Activated CD4-positive, alpha-beta T cell treated with anti-CD3 and anti-CD28 coated beads for 36 hours (primary cell): ENCODE measurements at regions of chr12 and their contacts with region 1.

Region 1: GRCh38 chr12:50597200-50598195 is 92.7 kb downstream of the DIP2B start:
- DNase-seq: peak; percentile 78
- ATAC-seq: peak; percentile 100
- H3K4me3 Mint-ChIP-seq: peak overlapping the region; percentile 44
- H3K27ac Mint-ChIP-seq: peak overlapping the region; percentile 90
- H3K4me1 Mint-ChIP-seq: peaks cover 45% of the 10 kb centered on the region
- H3K27me3 Mint-ChIP-seq: no peaks in the 10 kb centered on the region

Region 2: GRCh38 chr12:50542448-50542847 is 55.0 kb before region 1 on chr12:
- CTCF ChIA-PET with region 1: interaction called, 3 read pairs
- POLR2A ChIA-PET with region 1: no interaction called
- intact Hi-C with region 1: loop called (anchors 1 to 2 kb)
- DNase-seq: peak; percentile 59
- ATAC-seq: peak; percentile 98
- H3K4me3 Mint-ChIP-seq: no peak overlapping the region
- H3K27ac Mint-ChIP-seq: peak overlapping the region; percentile 92
- H3K4me1 Mint-ChIP-seq: peaks cover 61% of the 10 kb centered on the region
- H3K27me3 Mint-ChIP-seq: no peaks in the 10 kb centered on the region

Region 3: DNA sequence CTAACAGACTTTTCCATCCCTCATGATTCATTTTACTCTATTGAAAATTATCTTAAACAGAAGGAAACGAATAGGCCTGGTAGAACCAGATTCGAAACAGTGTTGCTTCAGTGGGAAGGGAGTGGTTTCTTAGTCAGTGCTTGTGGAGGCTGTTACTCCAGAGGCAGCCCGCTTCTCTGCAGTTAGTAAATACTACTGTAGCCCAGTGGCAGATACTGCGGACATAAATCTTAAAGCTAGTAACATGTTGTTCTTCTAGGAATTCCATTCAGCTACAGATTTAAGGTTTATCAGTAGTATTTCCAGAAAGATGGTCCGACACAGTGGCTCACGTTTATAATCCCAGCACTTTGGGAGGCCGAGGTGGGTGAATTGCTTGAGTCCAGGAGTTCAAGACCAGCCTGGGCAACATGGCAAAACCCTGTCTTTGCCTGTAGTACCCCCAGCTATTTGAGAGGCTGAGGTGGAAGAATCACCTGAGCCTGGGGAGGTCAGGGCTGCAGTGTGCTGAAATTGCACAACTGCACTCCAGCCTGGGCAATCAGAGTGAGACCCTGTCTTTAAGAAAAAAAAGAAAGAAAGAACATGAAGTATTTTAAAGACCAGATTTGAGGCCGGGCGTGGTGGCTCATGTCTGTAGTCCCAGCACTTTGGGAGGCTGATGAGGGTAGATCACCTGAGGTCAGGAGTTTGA is 46.8 kb before region 1 on chr12:
- CTCF ChIA-PET with region 1: interaction called, 4 read pairs
- POLR2A ChIA-PET with region 1: interaction called, 3 read pairs
- intact Hi-C with region 1: loop called in 1 of 2 experiments (anchors 1 kb)
- DNase-seq: no peak
- ATAC-seq: no peak
- H3K4me3 Mint-ChIP-seq: no peak overlapping the region
- H3K27ac Mint-ChIP-seq: no peak overlapping the region
- H3K4me1 Mint-ChIP-seq: peaks cover 66% of the 10 kb centered on the region
- H3K27me3 Mint-ChIP-seq: no peaks in the 10 kb centered on the region

Region 4: GRCh38 chr12:50620109-50620977 is 22.8 kb after region 1 on chr12:
- CTCF ChIA-PET with region 1: no interaction called
- POLR2A ChIA-PET with region 1: no interaction called
- intact Hi-C with region 1: loop called in 1 of 2 experiments (anchors 1 kb)
- DNase-seq: peak; percentile 59
- ATAC-seq: peak; percentile 86
- H3K4me3 Mint-ChIP-seq: no peak overlapping the region
- H3K27ac Mint-ChIP-seq: peak overlapping the region; percentile 86
- H3K4me1 Mint-ChIP-seq: peaks cover 64% of the 10 kb centered on the region
- H3K27me3 Mint-ChIP-seq: no peaks in the 10 kb centered on the region

Region 5: GRCh38 chr12:50637870-50638481 is 40.5 kb after region 1 on chr12:
- CTCF ChIA-PET with region 1: interaction called, 5 read pairs
- POLR2A ChIA-PET with region 1: no interaction called
- intact Hi-C with region 1: loop called (anchors 1 to 5 kb)
- DNase-seq: no peak
- ATAC-seq: peak; percentile 42
- H3K4me3 Mint-ChIP-seq: no peak overlapping the region
- H3K27ac Mint-ChIP-seq: peak overlapping the region; percentile 49
- H3K4me1 Mint-ChIP-seq: peaks cover 44% of the 10 kb centered on the region
- H3K27me3 Mint-ChIP-seq: no peaks in the 10 kb centered on the region